T-cell (primary cell): ENCODE measurements at regions of chr17 and their contacts with region 1.

Region 1: GRCh38 chr17:996554-997344 is at the start of gene TIMM22:
- DNase-seq: peak; percentile 84 to 96 (median 90)
- ATAC-seq: peak; percentile 94 to 97 (median 96)
- H3K4me3 ChIP-seq: peak within 1 kb of the TSS; percentile 95 to 97
- H3K4me3 Mint-ChIP-seq: peak within 1 kb of the TSS; percentile 96 to 98 (median 98)
- H3K27ac ChIP-seq: peak within 1 kb of the TSS; percentile 71
- H3K27ac Mint-ChIP-seq: peak within 1 kb of the TSS; percentile 97 to 99
- H3K4me1 ChIP-seq: peaks cover 14 to 24% of the 10 kb centered on the region in 2 experiments
- H3K4me1 Mint-ChIP-seq: peaks cover 21 to 26% (median 25%) of the 10 kb centered on the region in 3 donors
- H3K27me3 ChIP-seq: no peaks in the 10 kb centered on the region
- H3K27me3 Mint-ChIP-seq: no peaks in the 10 kb centered on the region
- total RNA-seq, gene TIMM22: 8.9 to 13.2 (median 11.4) TPM

Region 2: DNA sequence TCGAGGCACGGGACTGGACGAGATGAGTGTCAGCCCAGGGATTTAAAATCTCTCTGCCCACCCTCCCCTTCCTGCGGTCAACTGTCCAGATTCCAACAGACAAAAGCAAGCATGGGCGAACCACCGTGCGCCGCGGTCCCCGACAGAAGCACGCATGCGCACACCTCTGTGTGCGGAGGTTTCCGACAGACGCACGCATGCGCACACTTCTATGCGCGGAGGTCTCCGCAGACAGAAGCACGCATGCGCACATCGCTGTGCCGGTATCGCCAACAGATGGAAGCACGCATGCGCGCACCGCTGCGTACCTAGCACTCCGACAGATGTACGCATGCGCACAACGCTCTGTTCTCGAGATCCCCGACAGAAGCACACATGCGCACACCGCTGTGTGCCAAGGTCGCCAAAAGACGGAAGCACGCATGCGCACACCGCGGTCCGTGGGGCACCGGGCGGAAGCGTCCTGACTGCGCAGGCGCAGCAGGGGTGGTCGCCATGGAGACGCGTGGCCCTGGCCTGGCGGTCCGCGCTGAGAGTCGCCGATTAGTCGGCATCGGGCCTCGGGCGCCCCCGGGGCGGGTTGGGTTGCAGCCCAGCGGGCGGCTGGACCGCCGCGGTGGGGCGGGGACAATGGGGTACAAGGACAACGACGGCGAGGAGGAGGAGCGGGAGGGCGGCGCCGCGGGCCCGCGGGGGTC is 586.8 kb before region 1 on chr17:
- CTCF ChIA-PET with region 1: interaction called in 1 of 2 experiments, 12 read pairs
- POLR2A ChIA-PET with region 1: interaction called in 1 of 2 experiments, 4 read pairs
- DNase-seq: peak; percentile 97 to 100 (median 99)
- ATAC-seq: peak; percentile 53 to 70 (median 62)
- H3K4me3 ChIP-seq: peak overlapping the region; percentile 83
- H3K4me3 Mint-ChIP-seq: peak overlapping the region; percentile 86 to 96 (median 91)
- H3K27ac ChIP-seq: peak overlapping the region; percentile 92
- H3K27ac Mint-ChIP-seq: peak overlapping the region; percentile 97 to 98
- H3K4me1 ChIP-seq: peaks cover 39 to 58% of the 10 kb centered on the region in 2 experiments
- H3K4me1 Mint-ChIP-seq: peaks cover 65 to 75% (median 68%) of the 10 kb centered on the region in 3 donors
- H3K27me3 ChIP-seq: no peaks in the 10 kb centered on the region
- H3K27me3 Mint-ChIP-seq: peaks cover 0 to 2% of the 10 kb centered on the region in 2 donors

Region 3: GRCh38 chr17:781805-782731 is 214.7 kb before region 1 on chr17 and contains the starts of genes GLOD4 and MRM3:
- CTCF ChIA-PET with region 1: interaction called, 3 to 18 read pairs
- POLR2A ChIA-PET with region 1: interaction called in 1 of 2 experiments, 4 read pairs
- DNase-seq: peak; percentile 85 to 97 (median 93)
- ATAC-seq: peak; percentile 94 to 96 (median 96)
- H3K4me3 ChIP-seq: peak within 1 kb of the TSS; percentile 92 to 100
- H3K4me3 Mint-ChIP-seq: peak within 1 kb of the TSS; percentile 95 to 99 (median 96)
- H3K27ac ChIP-seq: peak within 1 kb of the TSS; percentile 84
- H3K27ac Mint-ChIP-seq: peak within 1 kb of the TSS; percentile 94 to 95
- H3K4me1 ChIP-seq: peaks cover 15 to 31% of the 10 kb centered on the region in 2 experiments
- H3K4me1 Mint-ChIP-seq: peaks cover 31 to 37% (median 35%) of the 10 kb centered on the region in 3 donors
- H3K27me3 ChIP-seq: no peaks in the 10 kb centered on the region
- H3K27me3 Mint-ChIP-seq: no peaks in the 10 kb centered on the region
- total RNA-seq, gene GLOD4: 66.9 to 85.1 (median 76.8) TPM
- total RNA-seq, gene MRM3: 23.0 to 34.1 (median 25.6) TPM

Region 4: DNA sequence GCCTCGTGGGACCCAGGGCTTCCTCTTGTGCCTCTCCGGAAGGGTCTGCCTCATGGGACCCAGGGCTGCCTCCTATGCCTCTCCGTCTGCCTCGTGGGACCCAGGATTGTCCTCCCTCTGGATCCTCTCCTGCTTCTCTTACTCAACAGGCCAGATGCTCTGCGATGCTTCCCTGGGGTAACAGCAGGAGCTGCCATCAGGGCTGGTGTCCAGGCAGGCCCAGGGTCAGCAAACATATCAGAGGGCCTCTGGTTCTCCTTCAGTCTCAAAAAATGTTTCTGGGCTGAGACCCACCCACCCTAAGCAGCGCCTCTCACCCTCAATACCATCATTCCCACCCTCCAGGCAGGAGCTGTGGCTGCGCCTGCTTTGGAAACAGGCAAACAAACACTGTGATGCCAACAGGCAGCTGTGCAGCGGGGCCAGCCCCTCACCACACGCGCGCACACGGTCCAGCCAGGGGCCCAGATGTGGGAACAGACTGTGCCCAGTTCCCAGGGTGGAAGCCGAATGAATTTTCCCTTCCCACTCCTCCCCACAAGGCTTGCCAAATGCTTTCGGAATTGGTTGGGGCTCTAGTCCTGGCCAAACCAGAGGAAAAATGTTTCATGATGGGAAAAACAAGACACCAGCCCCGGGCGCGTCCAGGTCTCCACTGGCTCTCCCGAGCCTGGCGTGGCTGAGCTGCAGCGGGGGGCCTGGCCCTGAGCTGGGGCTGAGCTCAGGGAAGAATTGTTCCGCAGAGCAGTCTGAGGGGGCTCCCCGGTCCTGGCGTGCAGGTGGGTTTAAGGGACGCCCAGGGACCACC is 11.5 kb after region 1 on chr17:
- CTCF ChIA-PET with region 1: no interaction called
- POLR2A ChIA-PET with region 1: no interaction called
- DNase-seq: no peak
- ATAC-seq: no peak
- H3K4me3 ChIP-seq: no peak overlapping the region
- H3K4me3 Mint-ChIP-seq: no peak overlapping the region
- H3K27ac ChIP-seq: no peak overlapping the region
- H3K27ac Mint-ChIP-seq: no peak overlapping the region
- H3K4me1 ChIP-seq: peaks cover 0 to 7% of the 10 kb centered on the region in 2 experiments
- H3K4me1 Mint-ChIP-seq: peaks cover 7 to 10% (median 10%) of the 10 kb centered on the region in 3 donors
- H3K27me3 ChIP-seq: no peaks in the 10 kb centered on the region
- H3K27me3 Mint-ChIP-seq: no peaks in the 10 kb centered on the region